Posterior vena cava (tissue), 2 donors: ENCODE measurements at regions of chr17 and their contacts with region 1.

Region 1: GRCh38 chr17:44171931-44172455 is 1.5 kb downstream of the ASB16 start:
- DNase-seq: no peak

Region 2: DNA sequence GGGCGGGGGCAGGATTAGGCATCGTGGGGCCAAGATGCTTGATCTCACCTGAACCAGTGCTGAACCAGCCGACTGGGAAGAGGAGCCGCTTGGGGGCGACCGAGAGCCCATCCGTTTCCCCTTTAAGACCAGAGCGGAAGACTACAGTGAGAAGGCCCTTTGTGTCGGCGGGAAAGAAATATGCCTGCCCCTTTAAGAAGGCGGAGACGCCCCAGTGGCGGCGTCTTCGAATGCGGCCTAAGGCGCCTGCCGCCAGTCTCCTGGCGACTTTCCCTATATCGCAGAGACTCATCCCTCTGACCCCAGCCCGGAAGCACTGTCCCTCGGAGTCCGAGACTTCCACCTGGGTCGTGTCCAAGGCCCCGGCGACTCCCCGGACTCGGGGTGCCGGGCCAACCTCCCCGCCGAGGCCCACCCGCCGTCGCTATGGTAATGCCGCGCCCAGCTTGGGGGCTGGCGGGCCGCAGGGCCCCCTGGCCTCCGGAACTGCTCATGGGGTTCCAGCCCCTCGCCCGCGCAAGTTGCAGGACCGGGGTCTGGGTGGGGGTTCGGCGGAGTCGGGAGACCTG is 30.2 kb before region 1 on chr17 and contains the start of gene HROB:
- intact Hi-C with region 1: loop called in 1 of 2 experiments (anchors 2 kb)
- DNase-seq: peak; percentile 98
- total RNA-seq, gene HROB: 0.65 to 1.2 TPM

Region 3: GRCh38 chr17:44279666-44280391 is 107.8 kb after region 1 on chr17:
- intact Hi-C with region 1: no loop called
- DNase-seq: peak; percentile 95

Region 4: DNA sequence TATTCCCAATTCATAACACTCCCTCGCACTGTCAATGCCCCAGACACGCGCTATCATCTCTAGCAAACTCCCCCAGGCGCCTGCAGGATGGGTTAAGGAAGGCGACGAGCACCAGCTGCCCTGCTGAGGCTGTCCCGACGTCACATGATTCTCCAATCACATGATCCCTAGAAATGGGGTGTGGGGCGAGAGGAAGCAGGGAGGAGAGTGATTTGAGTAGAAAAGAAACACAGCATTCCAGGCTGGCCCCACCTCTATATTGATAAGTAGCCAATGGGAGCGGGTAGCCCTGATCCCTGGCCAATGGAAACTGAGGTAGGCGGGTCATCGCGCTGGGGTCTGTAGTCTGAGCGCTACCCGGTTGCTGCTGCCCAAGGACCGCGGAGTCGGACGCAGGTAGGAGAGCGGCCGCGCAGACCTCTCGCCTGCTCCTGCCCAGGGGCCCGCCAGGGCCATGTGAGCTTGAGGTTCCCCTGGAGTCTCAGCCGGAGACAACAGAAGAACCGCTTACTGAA is 173.0 kb after region 1 on chr17 and contains the start of gene GRN:
- intact Hi-C with region 1: no loop called
- DNase-seq: peak; percentile 96
- total RNA-seq, gene GRN: 149 to 261 TPM